Pancreas (tissue), 10 donors: ENCODE measurements at regions of chr9 and their contacts with region 1.

Region 1: DNA sequence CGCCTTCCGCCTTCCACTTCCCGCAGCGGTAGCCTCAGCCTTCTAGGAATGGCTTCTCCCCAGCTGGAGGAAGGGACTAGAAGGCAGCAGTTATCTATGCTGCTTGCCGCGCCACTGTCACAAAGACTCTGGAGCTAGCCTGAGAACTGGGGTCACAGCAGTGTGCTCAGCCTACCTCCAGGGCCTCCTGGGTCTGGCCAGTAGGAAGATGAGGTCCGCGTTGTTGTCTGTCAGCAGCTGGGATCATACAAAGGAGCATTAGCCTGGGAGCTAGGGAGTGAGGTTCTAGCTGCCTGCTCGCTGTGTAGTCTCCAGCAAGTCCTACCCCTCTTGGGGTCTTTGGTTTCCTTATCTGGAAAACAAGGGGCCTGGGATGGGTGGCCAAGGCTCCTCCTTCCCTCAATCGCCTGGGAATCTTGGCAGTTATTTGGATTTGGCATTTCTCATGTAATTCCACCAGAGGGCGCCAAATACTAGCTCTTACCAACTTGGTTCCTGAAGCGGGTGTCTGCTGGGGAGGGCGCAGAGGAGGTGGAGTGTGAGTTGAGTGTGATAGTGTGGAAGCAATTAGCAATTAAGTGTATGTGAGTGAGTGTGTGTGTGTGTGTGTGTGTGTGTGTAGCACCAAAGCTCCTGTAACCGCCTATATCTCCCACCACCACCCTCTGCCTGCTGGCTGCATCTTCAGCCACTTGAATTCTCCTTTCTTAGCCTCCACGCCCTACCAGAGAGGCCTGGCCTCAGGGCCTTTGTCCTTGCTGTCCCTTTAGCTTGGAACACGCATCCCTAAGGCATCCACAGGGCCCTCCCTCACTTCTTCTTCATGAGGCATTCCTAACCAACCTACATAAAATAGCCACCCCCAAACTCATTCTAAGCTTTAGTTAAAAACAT is 97.1 kb downstream of the ENTREP1 start:
- DNase-seq: peak in 5 of 6 donors; percentile 22 to 62 (median 43)
- ATAC-seq: peak; percentile 80 to 97 (median 88)
- H3K4me3 ChIP-seq: no peak overlapping the region
- H3K27ac ChIP-seq: no peak overlapping the region
- H3K4me1 ChIP-seq: no peaks in the 10 kb centered on the region
- H3K27me3 ChIP-seq: no peaks in the 10 kb centered on the region
- CTCF ChIP-seq: peak; percentile 36 to 71 (median 64)

Region 2: DNA sequence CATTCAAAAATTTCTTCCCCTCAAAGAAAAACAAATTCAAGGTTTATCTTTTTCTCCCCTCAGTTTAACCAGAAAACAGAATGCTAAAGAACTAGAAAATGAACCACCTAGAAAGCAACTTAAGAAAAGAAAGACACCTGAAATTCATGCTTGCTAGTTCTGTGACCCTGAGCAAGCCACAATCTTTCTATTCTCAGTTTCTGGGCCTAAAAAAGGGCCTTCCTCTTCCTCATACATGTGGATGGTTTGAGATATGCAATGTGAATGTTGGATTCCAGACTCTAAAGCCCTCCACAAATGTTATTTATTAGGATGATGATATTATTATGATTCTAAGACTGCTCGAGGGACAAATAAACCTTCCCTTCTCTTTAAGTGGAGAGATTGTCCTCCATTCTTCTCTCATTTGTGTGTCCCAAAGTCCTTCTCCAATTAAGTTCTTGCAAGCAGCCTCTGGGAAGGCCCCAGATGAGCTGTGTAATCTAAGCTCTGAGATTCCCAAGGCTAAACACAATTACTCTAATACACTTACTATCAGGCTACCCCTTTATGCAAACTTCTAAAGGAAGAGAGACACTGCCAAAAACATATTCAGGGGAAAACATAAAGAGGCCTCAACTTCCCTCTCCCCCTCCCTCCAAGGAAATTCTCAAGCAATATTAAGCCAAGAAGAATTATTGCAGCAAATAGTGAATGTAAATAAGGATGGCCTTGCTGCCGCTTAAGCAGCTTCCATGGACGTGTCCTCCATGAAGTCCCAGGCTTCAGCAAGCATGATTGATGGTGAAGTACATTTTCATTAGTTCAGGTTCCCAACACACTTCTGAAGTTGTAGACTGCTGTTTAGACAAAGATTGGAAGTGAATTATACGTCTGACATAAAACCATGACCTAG is 488.5 kb before region 1 on chr9:
- intact Hi-C with region 1: no loop called
- DNase-seq: peak in 3 of 6 donors; percentile 26 to 37 (median 27)
- ATAC-seq: peak; percentile 71 to 80 (median 76)
- H3K4me3 ChIP-seq: no peak overlapping the region
- H3K27ac ChIP-seq: peak overlapping the region; percentile 37 to 78 (median 67)
- H3K4me1 ChIP-seq: peaks cover 24 to 50% (median 40%) of the 10 kb centered on the region in 3 donors
- H3K27me3 ChIP-seq: no peaks in the 10 kb centered on the region
- CTCF ChIP-seq: no peak

Region 3: DNA sequence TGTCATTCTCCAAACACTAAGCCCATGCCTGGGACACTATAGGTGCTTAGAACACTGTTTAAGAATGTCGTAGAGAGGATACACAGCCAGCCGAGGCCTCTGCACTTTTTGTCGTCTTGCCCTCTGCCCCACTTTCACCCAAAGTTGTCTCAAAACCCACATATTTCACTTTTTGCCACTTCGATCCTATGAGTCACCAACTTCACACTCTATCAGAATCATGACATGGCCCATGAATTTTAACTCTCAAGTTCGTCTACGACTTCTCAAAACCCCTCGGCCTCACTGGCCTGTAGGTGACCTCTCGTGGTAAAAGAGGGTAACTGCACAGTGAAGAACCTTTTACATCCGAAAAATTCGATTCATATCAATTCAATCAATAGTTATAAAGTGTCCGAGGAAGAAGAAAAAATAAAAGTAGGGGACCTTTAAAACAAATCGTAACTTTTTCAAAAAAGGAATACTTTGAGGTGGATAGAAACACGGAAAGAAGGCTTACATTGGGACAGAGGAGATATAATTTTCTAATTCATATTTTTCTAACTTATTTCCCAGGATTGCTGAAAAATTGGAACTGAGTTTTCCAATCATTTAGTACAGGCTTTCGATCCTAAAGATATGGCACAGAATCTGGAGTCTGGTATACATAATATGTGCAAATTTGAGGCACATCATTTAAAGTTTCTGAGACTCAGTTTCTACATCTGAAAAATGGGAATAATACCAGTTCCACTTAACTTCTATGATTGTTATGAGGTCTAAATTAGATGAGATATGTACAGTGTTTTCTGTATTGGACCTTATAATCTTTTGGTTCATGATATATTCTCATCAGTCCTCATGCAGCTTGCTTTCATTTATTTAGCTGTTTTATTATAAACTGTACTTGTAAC is 127.4 kb after region 1 on chr9:
- intact Hi-C with region 1: loop called (anchors 5 to 10 kb)
- DNase-seq: no peak
- ATAC-seq: peak in 3 of 4 donors; percentile 79 to 83 (median 79)
- H3K4me3 ChIP-seq: no peak overlapping the region
- H3K27ac ChIP-seq: no peak overlapping the region
- H3K4me1 ChIP-seq: no peaks in the 10 kb centered on the region
- H3K27me3 ChIP-seq: no peaks in the 10 kb centered on the region
- CTCF ChIP-seq: peak; percentile 59 to 81 (median 68)

Region 4: GRCh38 chr9:69877854-69878514 is 455.8 kb after region 1 on chr9:
- intact Hi-C with region 1: loop called in 1 of 3 experiments (anchors 5 kb)
- DNase-seq: no peak
- ATAC-seq: peak; percentile 55 to 87 (median 84)
- H3K4me3 ChIP-seq: no peak overlapping the region
- H3K27ac ChIP-seq: no peak overlapping the region
- H3K4me1 ChIP-seq: no peaks in the 10 kb centered on the region
- H3K27me3 ChIP-seq: no peaks in the 10 kb centered on the region
- CTCF ChIP-seq: peak in 2 of 4 donors; percentile 23 to 35

Region 5: DNA sequence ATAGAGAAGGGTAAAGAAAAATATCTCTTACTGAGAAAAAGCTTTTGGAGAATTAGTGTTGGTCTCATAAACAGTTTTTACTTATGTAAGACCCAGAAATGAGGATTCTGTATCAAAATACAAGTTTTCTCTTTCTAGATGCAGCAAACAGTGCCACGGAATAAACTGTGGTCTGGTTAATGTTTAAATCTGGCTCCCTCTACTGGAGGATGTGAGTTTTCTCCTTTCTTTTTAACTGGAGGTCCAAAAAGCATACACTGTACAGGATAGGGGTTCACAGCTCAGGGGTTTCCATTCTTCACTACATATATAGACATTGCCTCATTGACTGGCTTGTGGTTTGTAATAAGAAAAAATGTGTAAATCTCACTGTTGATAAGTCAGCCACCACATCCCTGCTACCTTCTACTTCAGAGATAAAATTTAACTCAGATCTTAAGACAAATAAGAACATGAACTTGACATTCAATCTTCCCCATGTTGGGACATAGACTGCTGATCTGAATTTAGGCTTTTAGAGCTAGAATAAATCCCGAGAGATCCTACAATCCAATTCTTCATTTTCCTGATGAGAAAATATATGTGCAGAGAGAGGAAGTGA is 497.4 kb after region 1 on chr9:
- intact Hi-C with region 1: loop called in 1 of 3 experiments (anchors 10 kb)
- DNase-seq: no peak
- ATAC-seq: peak in 3 of 4 donors; percentile 84 to 92 (median 86)
- H3K4me3 ChIP-seq: no peak overlapping the region
- H3K27ac ChIP-seq: no peak overlapping the region
- H3K4me1 ChIP-seq: peaks cover 0 to 2% (median 0%) of the 10 kb centered on the region in 3 donors
- H3K27me3 ChIP-seq: peaks cover 0 to 11% (median 0%) of the 10 kb centered on the region in 4 donors
- CTCF ChIP-seq: peak; percentile 41 to 61 (median 52)